Dendritic cell treated with granulocyte-macrophage colony-stimulating factor and Interleukin-4, amounts not matched to agents 40 ng/mL and 50 ng/mL, for 4 days (primary cell): ENCODE measurements at regions of chr11 and their contacts with region 1.

Region 1: DNA sequence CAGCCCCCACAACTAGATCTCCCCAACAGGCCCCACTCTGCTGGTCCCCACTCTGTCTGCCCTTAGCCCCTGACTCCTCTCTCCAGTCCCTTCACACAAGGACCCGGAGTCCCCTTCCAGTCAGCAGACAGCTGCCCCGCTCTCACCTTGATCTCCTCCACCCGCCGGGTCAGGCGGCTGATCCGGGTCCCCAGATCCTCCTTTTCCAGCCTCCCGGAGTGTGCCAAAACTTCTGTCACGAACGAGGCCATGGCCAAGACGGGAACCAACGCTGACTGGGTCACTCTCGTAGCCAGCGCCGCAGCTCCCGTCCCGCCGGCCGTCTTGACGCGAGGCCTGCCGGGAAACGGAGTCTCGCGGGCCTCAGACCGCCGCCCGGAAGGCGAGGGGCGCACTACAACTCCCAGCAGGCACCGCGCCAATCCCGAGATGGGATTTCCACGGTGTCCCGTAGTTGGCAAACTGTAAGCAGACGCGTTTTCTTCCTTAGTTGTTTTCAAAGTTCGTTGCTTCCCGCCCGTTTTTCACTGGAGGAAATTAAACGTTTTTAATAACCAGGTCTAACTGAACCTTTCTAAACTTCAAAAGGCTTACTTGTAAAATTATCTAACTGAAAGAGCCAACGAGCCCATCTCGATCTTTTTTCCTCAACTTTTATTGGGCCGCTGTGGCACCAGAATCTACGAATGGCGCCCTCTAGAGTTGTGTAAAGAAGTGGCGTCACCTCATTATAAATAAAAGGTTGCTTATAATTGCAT is at the start of gene ZW10:
- H3K4me3 Mint-ChIP-seq: peak within 1 kb of the TSS; percentile 98
- H3K27ac Mint-ChIP-seq: peak within 1 kb of the TSS; percentile 97
- H3K4me1 Mint-ChIP-seq: peaks cover 13% of the 10 kb centered on the region
- H3K27me3 Mint-ChIP-seq: peaks cover 14% of the 10 kb centered on the region

Region 2: GRCh38 chr11:113875234-113876073 is 101.9 kb after region 1 on chr11 and contains the start of gene USP28:
- intact Hi-C with region 1: loop called (anchors 1 kb)
- H3K4me3 Mint-ChIP-seq: peak within 1 kb of the TSS; percentile 92
- H3K27ac Mint-ChIP-seq: peak within 1 kb of the TSS; percentile 99
- H3K4me1 Mint-ChIP-seq: peaks cover 33% of the 10 kb centered on the region
- H3K27me3 Mint-ChIP-seq: no peaks in the 10 kb centered on the region

Region 3: DNA sequence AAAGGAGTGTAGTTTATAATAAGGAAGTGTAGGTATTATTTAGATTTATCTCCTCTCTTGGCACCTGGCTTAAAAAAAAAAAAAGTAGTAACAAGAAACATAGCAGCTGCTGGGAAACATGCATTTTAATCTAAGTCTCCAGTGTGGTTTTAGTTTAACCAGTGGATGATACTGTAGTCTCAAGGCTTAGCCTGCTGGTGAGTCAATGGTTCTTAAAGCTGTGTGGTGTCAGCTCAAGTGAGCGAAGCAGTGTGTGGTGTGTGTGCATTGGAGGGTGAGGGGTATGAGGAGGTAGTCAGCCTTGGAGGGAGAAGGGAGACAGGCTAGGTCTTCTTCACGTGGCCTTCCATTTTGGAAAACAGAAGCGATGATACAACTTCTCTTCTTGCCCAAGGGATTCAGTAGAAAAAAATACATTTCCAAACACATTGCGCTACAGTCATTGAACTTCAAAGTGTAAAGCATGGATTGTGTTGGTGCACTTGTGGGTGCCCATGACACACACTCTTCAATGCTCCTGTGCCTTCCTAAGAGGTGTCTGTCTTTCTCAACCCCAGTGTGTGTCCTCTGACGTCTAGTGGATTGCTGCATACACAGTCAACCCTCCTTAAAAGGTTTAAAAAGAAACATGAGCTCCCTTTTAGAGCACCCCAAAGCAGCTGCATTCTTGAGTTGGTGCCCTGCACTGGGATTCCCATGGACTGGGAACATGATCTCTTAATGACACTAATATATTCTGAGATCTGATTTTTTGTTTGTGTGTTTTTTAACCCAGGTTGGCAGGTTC is 326.0 kb after region 1 on chr11:
- intact Hi-C with region 1: no loop called
- H3K4me3 Mint-ChIP-seq: no peak overlapping the region
- H3K27ac Mint-ChIP-seq: no peak overlapping the region
- H3K4me1 Mint-ChIP-seq: peaks cover 8% of the 10 kb centered on the region
- H3K27me3 Mint-ChIP-seq: no peaks in the 10 kb centered on the region